GM12878 (cell line): ENCODE measurements at regions of chr2 and their contacts with region 1.

Region 1: GRCh38 chr2:143162123-143162837 is 33.1 kb downstream of the ARHGAP15 start:
- DNase-seq: no peak
- ATAC-seq: peak; percentile 96
- H3K4me3 ChIP-seq: no peak overlapping the region
- H3K27ac ChIP-seq: no peak overlapping the region
- H3K4me1 ChIP-seq: peaks cover 6% of the 10 kb centered on the region
- H3K27me3 ChIP-seq: no peaks in the 10 kb centered on the region
- CTCF ChIP-seq: peak; percentile 70 to 77 (median 73); a peak in 5 of 6 replicates
- EP300 ChIP-seq: no peak
- POLR2A ChIP-seq: no peak
- RAD21 ChIP-seq: peak; percentile 96

Region 2: DNA sequence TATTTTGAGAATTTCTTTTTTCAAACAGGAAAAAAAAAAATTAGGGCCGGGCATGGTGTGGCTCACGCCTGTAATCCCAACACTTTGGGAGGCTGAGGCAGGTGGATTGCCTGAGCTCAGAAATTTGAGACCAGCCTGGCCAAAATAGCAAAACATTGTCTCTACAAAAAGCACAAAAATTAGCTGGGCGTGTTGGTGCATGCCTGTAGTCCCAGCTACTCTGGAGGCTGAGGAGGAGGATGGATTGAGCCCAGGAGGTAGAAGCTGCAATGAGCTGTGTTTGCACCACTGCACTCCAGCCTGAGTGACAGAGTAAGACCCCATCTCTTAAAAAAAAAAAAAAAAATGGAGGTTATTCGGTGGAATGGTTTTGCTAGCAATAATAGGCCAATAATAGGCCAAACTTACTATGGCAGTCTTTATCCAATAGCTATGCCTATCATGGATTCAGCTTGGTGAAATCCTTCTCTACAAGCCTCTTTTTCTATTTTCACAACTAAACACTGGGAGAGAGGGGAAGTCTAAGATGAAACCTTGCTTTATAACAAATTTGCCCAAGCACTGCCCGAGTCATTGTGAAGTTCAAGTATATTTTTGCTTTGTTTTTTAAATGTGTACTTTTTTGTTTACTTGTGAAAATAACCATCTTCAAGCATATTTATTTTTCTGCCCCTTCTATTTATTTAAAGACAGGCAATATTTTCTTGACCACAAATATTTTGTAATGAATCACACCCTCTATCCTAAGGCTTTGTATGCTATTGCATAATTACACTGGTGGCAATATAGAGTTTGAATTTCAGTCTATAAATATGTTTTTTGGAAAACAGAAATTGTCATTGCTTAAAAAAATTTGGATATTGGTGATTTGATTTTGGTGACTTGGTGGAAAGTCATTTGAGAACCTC is 304.8 kb before region 1 on chr2:
- CTCF ChIA-PET with region 1: no interaction called
- POLR2A ChIA-PET with region 1: no interaction called
- RAD21 ChIA-PET with region 1: no interaction called
- SMC1A ChIA-PET with region 1: no interaction called
- in situ Hi-C with region 1: no loop called
- intact Hi-C with region 1: no loop called
- DNase-seq: no peak
- ATAC-seq: no peak
- H3K4me3 ChIP-seq: no peak overlapping the region
- H3K27ac ChIP-seq: no peak overlapping the region
- H3K4me1 ChIP-seq: no peaks in the 10 kb centered on the region
- H3K27me3 ChIP-seq: no peaks in the 10 kb centered on the region
- CTCF ChIP-seq: no peak
- EP300 ChIP-seq: no peak
- POLR2A ChIP-seq: no peak
- RAD21 ChIP-seq: no peak

Region 3: DNA sequence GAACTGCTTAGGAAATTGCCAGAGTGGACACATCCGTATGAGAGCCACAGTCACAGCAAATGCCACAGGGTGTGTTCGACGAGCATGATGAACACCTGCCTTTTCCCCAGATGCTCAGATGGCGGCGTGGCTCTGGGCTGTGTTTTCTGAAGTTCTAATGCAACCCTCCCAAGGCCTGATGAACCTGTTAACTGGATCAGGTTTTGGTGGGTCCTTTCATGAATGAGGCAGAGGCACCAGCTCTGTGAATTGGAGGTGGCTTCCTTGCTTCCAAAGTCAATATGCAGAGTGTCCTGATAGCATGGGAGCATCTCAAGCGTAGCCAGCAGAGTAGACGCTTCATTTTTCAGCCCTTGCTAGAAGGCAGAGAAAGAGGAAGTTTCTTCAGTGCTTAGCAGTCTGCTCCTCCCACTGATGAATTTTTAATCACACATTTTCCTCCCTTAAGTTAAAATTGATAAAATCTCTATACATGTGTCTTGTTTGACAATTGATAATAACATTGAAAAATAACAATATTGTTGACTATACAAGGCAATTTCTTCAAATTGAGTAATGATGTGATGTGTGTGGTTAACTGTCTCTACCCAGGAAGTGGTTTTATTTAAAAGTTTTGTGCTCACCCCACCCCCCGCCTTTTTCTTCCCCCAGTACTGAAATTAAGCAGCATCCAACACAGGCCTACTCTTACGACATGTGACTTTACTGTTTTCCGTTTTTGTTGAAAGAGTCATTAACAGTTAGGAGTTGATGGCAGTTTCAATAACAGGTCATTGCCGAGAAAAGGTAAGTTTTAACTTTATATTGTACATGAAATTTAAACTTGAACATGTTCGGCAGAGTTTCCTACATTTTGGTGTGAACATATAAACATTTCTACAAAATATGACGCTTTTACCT is 33.3 kb before region 1 on chr2 and contains the start of gene ARHGAP15:
- CTCF ChIA-PET with region 1: interaction called, 83 read pairs
- POLR2A ChIA-PET with region 1: interaction called, 3 read pairs
- RAD21 ChIA-PET with region 1: interaction called, 22 read pairs
- SMC1A ChIA-PET with region 1: interaction called, 110 read pairs
- in situ Hi-C with region 1: no loop called
- intact Hi-C with region 1: no loop called
- DNase-seq: peak; percentile 85
- ATAC-seq: peak; percentile 86
- H3K4me3 ChIP-seq: peak within 1 kb of the TSS; percentile 74
- H3K27ac ChIP-seq: peak within 1 kb of the TSS; percentile 88
- H3K4me1 ChIP-seq: peaks cover 10% of the 10 kb centered on the region
- H3K27me3 ChIP-seq: no peaks in the 10 kb centered on the region
- CTCF ChIP-seq: no peak
- EP300 ChIP-seq: peak; percentile 44 to 71; a peak in 3 of 4 replicates
- POLR2A ChIP-seq: peak; percentile 85
- RAD21 ChIP-seq: no peak
- polyA plus RNA-seq, gene ARHGAP15: 66.6 to 69.9 TPM

Region 4: GRCh38 chr2:143217512-143218115 is 55.3 kb after region 1 on chr2:
- CTCF ChIA-PET with region 1: interaction called, 47 read pairs
- POLR2A ChIA-PET with region 1: no interaction called
- RAD21 ChIA-PET with region 1: interaction called, 25 read pairs
- SMC1A ChIA-PET with region 1: interaction called, 40 read pairs
- in situ Hi-C with region 1: no loop called
- intact Hi-C with region 1: loop called (anchors 1 kb)
- DNase-seq: no peak
- ATAC-seq: no peak
- H3K4me3 ChIP-seq: no peak overlapping the region
- H3K27ac ChIP-seq: no peak overlapping the region
- H3K4me1 ChIP-seq: no peaks in the 10 kb centered on the region
- H3K27me3 ChIP-seq: no peaks in the 10 kb centered on the region
- CTCF ChIP-seq: no peak
- EP300 ChIP-seq: no peak
- POLR2A ChIP-seq: no peak
- RAD21 ChIP-seq: no peak

Region 5: DNA sequence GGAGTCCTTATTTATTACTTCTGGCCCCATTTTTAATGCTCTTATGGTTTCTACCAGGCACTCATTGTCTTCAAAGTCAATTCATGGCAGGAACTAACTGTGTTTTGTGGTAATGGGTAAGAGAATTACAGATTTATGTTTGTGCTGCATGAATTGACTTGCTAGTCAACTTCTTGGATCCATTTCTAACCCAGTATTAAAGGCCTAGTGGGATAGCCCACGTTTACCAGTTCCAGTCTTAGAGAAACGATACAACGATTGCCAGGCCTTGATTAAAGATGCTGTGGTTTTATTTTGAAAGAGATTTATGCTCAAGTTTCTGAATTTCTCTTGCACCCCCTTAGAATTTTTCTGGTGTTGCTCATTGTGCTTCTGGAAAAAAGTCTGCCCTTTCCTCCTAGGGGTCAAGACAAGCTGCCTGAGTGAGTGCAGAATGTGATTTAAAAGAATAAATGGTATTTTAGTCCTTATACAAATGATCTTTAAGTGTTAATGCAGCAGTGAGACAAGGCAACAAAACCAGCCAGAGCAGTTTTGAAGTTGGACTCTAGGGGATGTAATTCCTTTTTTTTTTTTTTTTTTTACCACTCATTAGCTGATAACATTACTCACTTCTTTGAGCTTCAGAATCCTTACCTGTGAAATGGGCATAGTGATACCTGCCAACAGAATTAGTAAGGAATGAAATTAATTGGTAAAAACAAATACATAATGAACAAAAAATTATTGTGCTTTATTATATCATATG is 68.4 kb after region 1 on chr2:
- CTCF ChIA-PET with region 1: interaction called, 24 read pairs
- POLR2A ChIA-PET with region 1: interaction called, 3 read pairs
- RAD21 ChIA-PET with region 1: interaction called, 5 read pairs
- SMC1A ChIA-PET with region 1: interaction called, 3 read pairs
- in situ Hi-C with region 1: no loop called
- intact Hi-C with region 1: no loop called
- DNase-seq: no peak
- ATAC-seq: no peak
- H3K4me3 ChIP-seq: no peak overlapping the region
- H3K27ac ChIP-seq: no peak overlapping the region
- H3K4me1 ChIP-seq: no peaks in the 10 kb centered on the region
- H3K27me3 ChIP-seq: no peaks in the 10 kb centered on the region
- CTCF ChIP-seq: no peak
- EP300 ChIP-seq: no peak
- POLR2A ChIP-seq: no peak
- RAD21 ChIP-seq: no peak

Region 6: GRCh38 chr2:143284087-143284675 is 121.9 kb after region 1 on chr2:
- CTCF ChIA-PET with region 1: interaction called, 10 read pairs
- POLR2A ChIA-PET with region 1: no interaction called
- RAD21 ChIA-PET with region 1: no interaction called
- SMC1A ChIA-PET with region 1: interaction called, 3 read pairs
- in situ Hi-C with region 1: no loop called
- intact Hi-C with region 1: no loop called
- DNase-seq: no peak
- ATAC-seq: peak; percentile 88
- H3K4me3 ChIP-seq: no peak overlapping the region
- H3K27ac ChIP-seq: no peak overlapping the region
- H3K4me1 ChIP-seq: no peaks in the 10 kb centered on the region
- H3K27me3 ChIP-seq: no peaks in the 10 kb centered on the region
- CTCF ChIP-seq: peak; percentile 57 to 85 (median 77)
- EP300 ChIP-seq: no peak
- POLR2A ChIP-seq: no peak
- RAD21 ChIP-seq: peak; percentile 35; the same call in 1 of the 2 replicates

Region 7: DNA sequence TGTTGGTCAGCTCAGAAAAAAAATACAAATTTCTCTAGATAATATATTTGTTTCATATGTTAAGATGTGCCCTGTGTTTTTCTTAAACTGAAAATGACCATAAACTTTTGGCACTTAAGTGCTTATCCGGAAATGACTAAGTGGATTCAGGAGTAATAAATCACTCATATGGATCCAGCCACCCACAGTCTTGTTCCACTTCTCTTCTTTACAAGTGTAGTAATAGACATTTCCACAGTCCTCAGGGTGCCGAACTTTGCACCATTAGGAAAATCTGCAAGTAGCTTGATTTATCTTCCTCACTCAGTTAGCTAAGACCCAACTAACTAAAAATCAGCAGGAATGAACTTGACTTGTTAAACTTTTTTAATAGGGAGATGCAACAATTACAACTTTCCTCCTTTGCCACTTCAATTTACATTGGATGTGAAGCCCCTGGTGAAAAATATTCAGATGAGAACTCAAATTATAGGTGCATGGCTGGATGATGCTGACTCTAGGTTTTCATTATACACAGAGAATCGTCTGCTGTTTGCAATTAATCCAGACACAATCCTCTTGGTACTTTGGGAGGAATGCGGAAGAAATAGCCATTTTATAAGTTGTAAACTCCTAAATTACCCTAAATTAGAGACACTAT is 289.5 kb after region 1 on chr2:
- CTCF ChIA-PET with region 1: no interaction called
- POLR2A ChIA-PET with region 1: no interaction called
- RAD21 ChIA-PET with region 1: no interaction called
- SMC1A ChIA-PET with region 1: no interaction called
- in situ Hi-C with region 1: no loop called
- intact Hi-C with region 1: no loop called
- DNase-seq: no peak
- ATAC-seq: peak; percentile 76
- H3K4me3 ChIP-seq: no peak overlapping the region
- H3K27ac ChIP-seq: no peak overlapping the region
- H3K4me1 ChIP-seq: no peaks in the 10 kb centered on the region
- H3K27me3 ChIP-seq: no peaks in the 10 kb centered on the region
- CTCF ChIP-seq: no peak
- EP300 ChIP-seq: no peak
- POLR2A ChIP-seq: no peak
- RAD21 ChIP-seq: no peak